HepG2 (cell line): ENCODE measurements at regions of chr17 and their contacts with region 1.

Region 1: DNA sequence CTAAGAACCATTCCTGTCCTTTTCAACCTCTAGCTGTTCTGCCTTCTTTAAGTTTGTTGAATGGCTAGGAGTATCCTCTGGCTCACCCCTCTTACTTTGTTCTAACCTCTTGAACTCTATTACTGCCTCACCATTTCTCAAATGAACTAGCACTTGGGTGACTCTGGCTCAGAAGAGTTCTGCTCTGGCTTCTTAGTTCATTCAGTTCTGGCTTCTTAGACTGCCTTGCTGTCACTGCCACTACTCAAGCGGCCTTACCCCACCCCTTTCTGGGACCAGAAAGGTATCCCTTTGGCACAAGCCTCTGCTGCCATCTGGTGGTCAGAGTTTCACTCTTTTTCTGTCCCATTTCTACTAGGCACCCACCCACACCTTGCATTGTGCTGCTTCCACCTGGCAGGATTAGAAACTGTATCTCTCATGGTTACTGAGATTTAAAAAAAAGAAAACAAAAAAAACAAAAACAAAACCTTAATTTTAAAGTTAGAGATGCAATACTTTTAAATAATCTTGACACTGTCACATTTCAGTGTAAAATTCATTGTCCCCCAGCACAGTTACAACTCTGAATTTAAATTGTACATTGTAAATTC is 6.8 kb upstream of the ABCA10 start:
- DNase-seq: peak; percentile 88
- ATAC-seq: peak; percentile 100
- H3K4me3 ChIP-seq: no peak overlapping the region
- H3K27ac ChIP-seq: no peak overlapping the region
- H3K4me1 ChIP-seq: peaks cover 14% of the 10 kb centered on the region
- H3K27me3 ChIP-seq: no peaks in the 10 kb centered on the region
- CTCF ChIP-seq: peak; percentile 97
- EP300 ChIP-seq: no peak
- POLR2A ChIP-seq: no peak
- RAD21 ChIP-seq: peak; percentile 98

Region 2: GRCh38 chr17:68903286-68903685 is 332.1 kb before region 1 on chr17:
- CTCF ChIA-PET with region 1: no interaction called
- POLR2A ChIA-PET with region 1: no interaction called
- in situ Hi-C with region 1: loop called (anchors 5 kb)
- intact Hi-C with region 1: loop called (anchors 2 kb)
- DNase-seq: no peak
- ATAC-seq: no peak
- H3K4me3 ChIP-seq: no peak overlapping the region
- H3K27ac ChIP-seq: no peak overlapping the region
- H3K4me1 ChIP-seq: peaks cover 19% of the 10 kb centered on the region
- H3K27me3 ChIP-seq: no peaks in the 10 kb centered on the region
- CTCF ChIP-seq: no peak
- EP300 ChIP-seq: no peak
- POLR2A ChIP-seq: no peak
- RAD21 ChIP-seq: no peak

Region 3: GRCh38 chr17:68972119-68972704 is 263.2 kb before region 1 on chr17:
- CTCF ChIA-PET with region 1: interaction called, 8 read pairs
- POLR2A ChIA-PET with region 1: no interaction called
- in situ Hi-C with region 1: loop called (anchors 10 kb)
- intact Hi-C with region 1: loop called (anchors 1 kb)
- DNase-seq: peak; percentile 43
- ATAC-seq: no peak
- H3K4me3 ChIP-seq: no peak overlapping the region
- H3K27ac ChIP-seq: no peak overlapping the region
- H3K4me1 ChIP-seq: 0 out of 2 replicates have a peak, but pooled peaks cover 10% of the 10 kb centered on the region
- H3K27me3 ChIP-seq: no peaks in the 10 kb centered on the region
- CTCF ChIP-seq: peak; percentile 73
- EP300 ChIP-seq: peak in 1 of 2 experiments; percentile 38; a peak in 1 of 4 replicates
- POLR2A ChIP-seq: no peak
- RAD21 ChIP-seq: peak; percentile 85

Region 4: DNA sequence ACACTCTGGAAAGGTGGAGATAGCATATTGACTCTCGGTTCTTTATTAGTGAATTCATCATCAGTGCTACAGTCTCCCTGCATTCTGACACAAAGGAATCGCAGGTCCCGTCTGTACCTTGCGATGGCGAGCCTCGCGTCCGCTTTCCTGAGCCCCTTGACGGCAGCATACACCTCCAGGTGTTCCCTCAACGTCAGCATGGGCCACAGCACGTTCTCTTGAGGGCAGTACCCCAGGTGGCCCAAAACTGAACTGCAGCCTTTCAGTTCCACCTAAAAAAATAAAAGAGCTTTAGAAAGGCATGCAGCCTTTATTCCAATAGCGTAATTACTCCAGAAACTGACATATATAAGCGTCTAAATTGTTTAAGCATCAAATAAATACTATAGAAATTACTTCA is 150.5 kb before region 1 on chr17:
- CTCF ChIA-PET with region 1: no interaction called
- POLR2A ChIA-PET with region 1: no interaction called
- in situ Hi-C with region 1: no loop called
- intact Hi-C with region 1: loop called (anchors 10 kb)
- DNase-seq: peak; percentile 50
- ATAC-seq: peak; percentile 92
- H3K4me3 ChIP-seq: no peak overlapping the region
- H3K27ac ChIP-seq: no peak overlapping the region
- H3K4me1 ChIP-seq: peaks cover 5% of the 10 kb centered on the region
- H3K27me3 ChIP-seq: no peaks in the 10 kb centered on the region
- CTCF ChIP-seq: peak; percentile 59
- EP300 ChIP-seq: no peak
- POLR2A ChIP-seq: no peak
- RAD21 ChIP-seq: peak; percentile 42; the same call in 1 of the 2 replicates

Region 5: DNA sequence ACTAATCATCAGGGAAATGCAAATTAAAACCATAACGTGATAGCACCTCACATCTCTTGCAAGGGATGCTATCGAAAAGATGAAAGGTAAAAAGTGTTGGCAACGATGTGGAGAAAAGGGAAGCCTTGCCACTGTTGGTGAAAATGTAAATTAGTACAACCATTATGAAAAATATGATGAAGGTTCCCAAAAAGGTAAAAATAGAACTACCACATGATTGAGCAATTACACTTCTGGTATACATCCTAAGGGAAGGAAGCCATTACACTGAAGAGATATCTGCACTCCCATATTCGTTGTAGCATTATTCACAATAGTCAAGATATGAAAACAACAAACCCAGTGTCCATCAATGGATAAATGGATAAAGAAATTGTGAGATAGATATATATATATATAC is 28.3 kb before region 1 on chr17:
- CTCF ChIA-PET with region 1: no interaction called
- POLR2A ChIA-PET with region 1: no interaction called
- in situ Hi-C with region 1: no loop called
- intact Hi-C with region 1: no loop called
- DNase-seq: no peak
- ATAC-seq: no peak
- H3K4me3 ChIP-seq: no peak overlapping the region
- H3K27ac ChIP-seq: no peak overlapping the region
- H3K4me1 ChIP-seq: no peaks in the 10 kb centered on the region
- H3K27me3 ChIP-seq: 0 out of 5 replicates have a peak, but pooled peaks cover 0 to 3% of the 10 kb centered on the region in 2 experiments
- CTCF ChIP-seq: no peak
- EP300 ChIP-seq: no peak
- POLR2A ChIP-seq: no peak
- RAD21 ChIP-seq: no peak

Region 6: DNA sequence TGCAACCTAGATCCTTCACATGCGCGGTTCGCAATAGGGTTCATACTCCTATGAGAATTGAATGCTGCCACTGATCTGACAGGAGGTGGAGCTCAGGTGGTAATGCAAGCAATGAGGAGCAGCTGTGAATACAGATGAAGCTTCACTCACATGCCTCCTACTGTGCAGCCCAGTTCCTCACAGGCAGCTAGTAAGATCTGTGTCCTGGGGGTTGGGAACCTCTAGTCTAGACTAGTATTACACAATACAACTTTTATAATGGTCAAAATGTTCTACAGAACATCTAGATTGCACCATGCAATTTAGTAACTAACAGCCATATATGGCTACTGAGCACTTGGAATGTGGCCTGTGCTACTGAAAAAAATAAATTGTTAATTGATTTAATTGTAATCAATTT is 64.8 kb after region 1 on chr17:
- CTCF ChIA-PET with region 1: no interaction called
- POLR2A ChIA-PET with region 1: no interaction called
- in situ Hi-C with region 1: no loop called
- intact Hi-C with region 1: no loop called
- DNase-seq: no peak
- ATAC-seq: no peak
- H3K4me3 ChIP-seq: no peak overlapping the region
- H3K27ac ChIP-seq: no peak overlapping the region
- H3K4me1 ChIP-seq: no peaks in the 10 kb centered on the region
- H3K27me3 ChIP-seq: no peaks in the 10 kb centered on the region
- CTCF ChIP-seq: no peak
- EP300 ChIP-seq: no peak
- POLR2A ChIP-seq: no peak
- RAD21 ChIP-seq: no peak